Sigmoid colon (tissue), 7 donors: ENCODE measurements at regions of chr2 and their contacts with region 1.

Region 1: DNA sequence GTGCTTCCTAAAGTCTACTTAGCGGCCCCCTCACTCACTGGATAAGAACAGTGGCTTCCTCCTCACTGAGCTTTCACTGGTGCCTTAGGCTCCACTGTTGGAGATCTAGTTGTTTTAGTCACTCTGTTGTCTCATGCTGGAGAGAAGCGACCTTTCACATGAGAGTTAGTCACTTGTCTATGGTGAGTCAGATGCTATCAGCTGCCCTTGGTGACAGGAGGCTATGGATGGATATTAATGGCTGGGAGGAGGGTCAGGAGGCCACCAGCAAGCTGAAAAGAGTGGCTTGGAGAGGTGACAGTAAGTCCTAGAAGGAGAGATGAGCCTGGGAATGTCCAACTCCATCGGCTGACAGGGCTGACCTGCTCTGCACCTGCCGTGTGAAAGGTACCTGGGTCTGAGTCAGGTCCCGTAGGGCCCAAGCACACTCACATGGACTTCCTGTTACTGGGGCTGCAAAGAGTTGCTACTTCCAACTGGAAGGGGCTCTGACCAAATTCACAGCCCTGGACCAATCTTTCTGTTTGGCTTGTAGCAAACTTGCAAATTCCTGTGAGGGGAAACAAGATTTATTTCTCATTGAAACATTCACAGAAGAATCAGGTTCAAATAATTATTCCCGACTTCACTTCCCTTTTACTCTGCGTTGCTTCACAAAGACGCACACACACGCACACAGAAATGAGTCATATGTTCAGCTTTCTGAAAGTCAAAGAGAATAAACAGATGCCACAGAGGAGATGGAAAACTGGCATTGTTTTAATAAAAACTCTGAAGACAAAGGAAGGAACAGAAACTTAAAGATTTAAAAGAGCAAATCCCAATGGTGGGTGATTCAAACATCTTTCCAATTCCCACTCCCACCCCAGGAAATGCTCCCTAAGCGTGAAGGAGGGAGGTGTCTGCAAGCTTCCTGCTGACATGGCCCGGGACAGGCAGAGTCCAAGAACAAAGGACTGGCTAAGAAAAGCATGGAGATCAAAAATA is 203.5 kb upstream of the TWIST2 start:
- DNase-seq: no peak
- H3K4me3 ChIP-seq: no peak overlapping the region
- H3K27ac ChIP-seq: peak overlapping the region; percentile 72 to 90 (median 83)
- H3K4me1 ChIP-seq: peaks cover 0 to 35% (median 30%) of the 10 kb centered on the region in 4 donors
- H3K27me3 ChIP-seq: no peaks in the 10 kb centered on the region
- CTCF ChIP-seq: no peak
- EP300 ChIP-seq: peak; percentile 53 to 92 (median 82)
- POLR2A ChIP-seq: no peak

Region 2: GRCh38 chr2:238339395-238340213 is 304.8 kb before region 1 on chr2:
- intact Hi-C with region 1: no loop called
- DNase-seq: no peak
- H3K4me3 ChIP-seq: no peak overlapping the region
- H3K27ac ChIP-seq: no peak overlapping the region
- H3K4me1 ChIP-seq: peaks cover 0 to 12% (median 1%) of the 10 kb centered on the region in 4 donors
- H3K27me3 ChIP-seq: no peaks in the 10 kb centered on the region
- CTCF ChIP-seq: no peak
- EP300 ChIP-seq: no peak
- POLR2A ChIP-seq: no peak

Region 3: DNA sequence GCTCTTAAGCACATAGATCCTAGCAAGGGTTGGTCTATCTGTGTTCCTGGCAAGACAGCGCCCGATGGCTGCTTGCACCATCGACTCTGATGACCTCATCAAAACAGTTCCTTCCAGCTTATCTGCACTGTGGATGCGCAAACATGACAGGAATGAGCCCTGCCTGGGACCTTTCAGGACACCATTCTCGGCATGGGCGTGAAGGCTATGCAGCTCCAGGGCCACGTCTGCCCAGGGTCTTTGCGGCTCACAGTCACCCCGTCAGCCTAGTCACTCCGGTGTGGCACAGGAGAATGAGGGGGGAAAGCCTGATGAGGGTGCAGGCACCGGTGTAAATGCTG is 55.7 kb after region 1 on chr2:
- intact Hi-C with region 1: no loop called
- DNase-seq: no peak
- H3K4me3 ChIP-seq: no peak overlapping the region
- H3K27ac ChIP-seq: peak overlapping the region in 2 of 4 donors; percentile 57 to 67
- H3K4me1 ChIP-seq: peaks cover 0 to 69% (median 52%) of the 10 kb centered on the region in 4 donors
- H3K27me3 ChIP-seq: no peaks in the 10 kb centered on the region
- CTCF ChIP-seq: no peak
- EP300 ChIP-seq: peak in 1 of 4 donors; percentile 25
- POLR2A ChIP-seq: no peak

Region 4: DNA sequence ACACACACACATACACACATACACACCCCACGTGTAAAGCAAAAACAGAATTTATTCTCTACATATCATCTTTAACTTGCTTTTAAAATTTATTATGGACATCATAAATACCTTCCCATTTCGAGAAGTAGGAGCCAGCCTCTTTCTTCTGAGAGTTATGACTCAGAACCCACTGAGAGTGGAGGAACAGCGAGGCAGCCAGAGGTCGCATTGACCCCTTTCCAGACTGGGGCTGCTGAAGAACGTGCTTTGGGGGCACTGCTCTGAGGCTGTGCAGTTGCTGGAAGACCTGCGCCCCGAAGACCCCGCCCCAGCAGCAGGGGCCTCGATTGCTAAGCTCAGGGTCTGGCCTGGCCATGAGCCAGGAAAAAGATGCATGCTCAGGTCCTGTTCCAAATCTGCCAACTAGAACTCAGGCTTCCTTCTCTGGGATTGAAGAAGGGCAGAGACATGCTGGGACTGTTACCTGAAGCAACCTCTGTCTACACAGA is 69.7 kb after region 1 on chr2:
- intact Hi-C with region 1: loop called (anchors 5 kb)
- DNase-seq: no peak
- H3K4me3 ChIP-seq: no peak overlapping the region
- H3K27ac ChIP-seq: peak overlapping the region; percentile 48 to 87 (median 80)
- H3K4me1 ChIP-seq: peaks cover 0 to 46% (median 29%) of the 10 kb centered on the region in 4 donors
- H3K27me3 ChIP-seq: no peaks in the 10 kb centered on the region
- CTCF ChIP-seq: no peak
- EP300 ChIP-seq: peak in 3 of 4 donors; percentile 34 to 74 (median 47)
- POLR2A ChIP-seq: no peak

Region 5: DNA sequence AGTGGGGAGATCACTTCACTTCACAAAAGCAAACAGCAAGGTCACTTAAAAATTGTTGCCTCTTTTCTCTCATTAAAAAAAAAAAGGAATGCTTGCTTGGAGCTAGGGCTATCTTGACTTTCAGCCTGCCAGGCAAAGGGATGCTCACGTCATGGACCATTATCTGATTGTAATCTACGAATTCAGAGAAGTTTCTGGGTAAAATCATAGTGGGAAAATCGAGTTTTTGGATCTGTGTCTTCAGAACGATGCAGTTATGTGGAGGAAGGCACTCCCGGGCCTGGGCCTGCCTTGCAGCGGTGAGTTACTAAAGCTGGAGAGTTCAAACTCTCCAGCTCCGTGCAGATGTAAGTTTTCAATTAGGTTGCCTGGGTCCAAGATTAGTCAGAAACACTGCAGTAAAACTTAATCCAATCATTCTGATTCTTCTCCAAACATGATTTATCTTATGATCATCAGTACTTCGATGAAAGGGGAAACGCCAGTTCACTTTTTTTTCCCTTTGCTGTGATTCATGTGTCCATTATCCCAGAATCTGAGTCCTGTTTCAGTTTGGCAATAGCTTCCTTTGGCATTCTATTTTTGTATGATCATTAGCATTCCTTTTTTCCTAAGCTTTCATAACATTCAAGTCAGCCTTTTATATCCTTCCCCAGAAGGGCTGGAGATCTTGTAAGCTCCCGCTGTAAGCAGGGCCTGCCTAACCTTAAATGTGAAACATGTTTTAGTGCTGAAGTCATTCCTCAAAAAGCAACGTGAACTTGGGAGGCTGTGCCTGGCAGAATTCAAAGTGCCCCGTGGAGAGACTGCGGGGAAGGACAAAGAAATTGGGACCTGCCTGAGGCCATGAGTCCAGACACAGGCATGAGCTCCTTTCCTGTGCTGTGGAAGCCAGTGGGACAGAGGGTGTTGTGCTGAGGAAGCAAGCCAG is 84.2 kb after region 1 on chr2:
- intact Hi-C with region 1: loop called (anchors 1 kb)
- DNase-seq: peak; percentile 85
- H3K4me3 ChIP-seq: no peak overlapping the region
- H3K27ac ChIP-seq: peak overlapping the region; percentile 81 to 95 (median 94)
- H3K4me1 ChIP-seq: peaks cover 0 to 63% (median 60%) of the 10 kb centered on the region in 4 donors
- H3K27me3 ChIP-seq: no peaks in the 10 kb centered on the region
- CTCF ChIP-seq: no peak
- EP300 ChIP-seq: peak in 2 of 4 donors; percentile 58 to 75
- POLR2A ChIP-seq: no peak